Left ventricle myocardium superior (tissue), 1 donor: ENCODE measurements at regions of chr10 and their contacts with region 1.

Region 1: DNA sequence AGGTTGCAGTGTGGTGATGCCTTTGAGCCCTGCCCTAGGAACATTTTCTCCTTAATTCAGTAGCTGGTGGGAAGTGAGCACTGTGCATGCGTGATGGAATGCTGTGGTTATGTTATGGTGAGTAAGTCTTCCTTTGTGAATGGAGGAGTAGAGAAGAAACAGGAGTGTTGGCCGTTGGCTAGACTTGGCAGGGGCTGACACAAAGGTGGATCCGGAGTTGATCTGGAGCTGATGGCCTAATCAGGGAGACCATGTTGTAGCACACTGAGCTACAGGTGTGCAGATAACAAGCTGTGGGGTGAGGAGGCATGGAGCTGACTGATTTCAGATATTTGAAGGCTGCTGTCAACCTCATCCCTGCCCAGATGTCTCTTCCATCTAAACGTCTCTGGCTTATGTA is 122.3 kb downstream of the CNNM2 start:
- DNase-seq: no peak
- ATAC-seq: no peak

Region 2: DNA sequence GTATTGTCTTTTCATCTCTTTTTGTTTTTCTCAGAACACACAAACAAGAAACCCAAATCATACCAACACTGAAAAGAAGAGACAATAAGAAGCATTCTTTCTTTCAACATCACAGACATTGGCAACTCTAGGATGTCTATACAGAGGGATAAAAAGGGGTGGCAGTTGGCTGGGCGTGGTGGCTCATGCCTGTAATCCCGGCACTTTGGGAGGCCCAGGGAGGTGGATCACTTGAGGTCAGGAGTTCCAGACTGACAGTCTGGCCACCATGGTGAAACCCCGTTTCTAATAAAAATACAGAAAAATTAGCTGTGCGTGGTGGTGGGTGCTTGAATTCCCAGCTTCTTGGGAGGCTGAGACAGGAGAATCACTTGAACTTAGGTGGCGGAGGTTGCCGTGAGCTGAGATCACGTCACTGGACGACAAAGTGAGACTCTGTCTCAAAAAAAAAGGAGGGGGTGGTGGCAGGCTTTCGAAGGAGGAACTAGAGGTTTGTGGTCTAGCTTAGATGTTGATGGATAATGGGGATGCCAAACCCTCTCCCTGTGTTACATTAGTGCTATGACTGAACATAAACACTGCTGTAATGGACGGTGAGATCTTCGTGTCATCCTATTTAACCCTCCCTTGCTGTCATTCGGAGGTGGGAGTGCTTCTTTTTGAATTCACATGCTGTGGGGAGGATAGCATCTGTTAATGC is 113.0 kb before region 1 on chr10:
- intact Hi-C with region 1: loop called (anchors 10 kb)
- DNase-seq: no peak
- ATAC-seq: no peak

Region 3: GRCh38 chr10:103168486-103169311 is 128.3 kb after region 1 on chr10:
- intact Hi-C with region 1: no loop called
- DNase-seq: no peak
- ATAC-seq: no peak